CD8-positive, alpha-beta T cell (primary cell): ENCODE measurements at regions of chr15 and their contacts with region 1.

Region 1: DNA sequence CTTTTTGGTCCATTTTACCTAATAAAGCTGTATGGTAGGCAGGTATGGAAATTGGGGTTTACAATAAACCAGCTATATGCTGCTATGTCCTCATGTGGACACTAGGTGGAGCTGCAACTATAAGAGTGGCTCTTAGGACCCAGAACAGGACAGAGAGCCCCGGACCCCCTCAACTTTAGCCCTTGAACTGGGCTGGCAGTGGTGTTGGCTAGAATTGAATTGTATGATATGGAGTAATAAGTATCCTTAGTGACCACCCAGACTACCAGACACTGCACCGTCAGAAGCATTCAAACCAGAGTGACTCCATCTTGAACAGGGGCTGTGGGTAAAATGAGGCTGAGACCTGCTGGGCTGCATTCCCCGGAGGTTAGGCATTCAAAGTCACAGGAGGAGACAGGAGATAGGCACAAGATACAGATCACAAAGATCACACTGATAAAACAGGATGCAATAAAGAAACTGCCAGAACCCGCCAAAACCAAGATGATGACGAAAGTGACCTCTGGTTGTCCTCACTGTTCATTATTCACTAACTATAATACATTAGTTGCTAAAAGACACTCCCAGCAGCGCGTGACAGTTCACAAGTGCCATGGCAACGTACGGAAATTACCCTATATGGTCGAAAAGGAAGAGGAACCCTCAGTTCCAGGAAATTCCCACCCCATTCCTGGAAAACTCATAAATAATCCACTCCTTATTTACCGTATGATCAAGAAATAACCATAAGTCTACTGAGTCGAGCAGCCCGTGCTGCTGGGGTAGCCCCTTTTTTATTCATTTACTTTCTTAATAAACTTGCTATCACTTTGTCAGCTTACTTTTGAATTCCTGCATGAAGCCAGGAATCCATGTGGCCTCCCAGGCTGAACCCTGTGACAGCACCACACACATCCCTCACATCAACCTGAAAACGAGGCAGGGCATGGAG is 68.7 kb upstream of the BLM start:
- DNase-seq: peak in 8 of 9 experiments; percentile 33 to 81 (median 62)
- ATAC-seq: peak; percentile 89
- H3K4me3 ChIP-seq: no peak overlapping the region
- H3K4me3 Mint-ChIP-seq: peak overlapping the region; percentile 12
- H3K27ac ChIP-seq: no peak overlapping the region
- H3K27ac Mint-ChIP-seq: no peak overlapping the region
- H3K4me1 ChIP-seq: peaks cover 24% of the 10 kb centered on the region
- H3K4me1 Mint-ChIP-seq: peaks cover 20% of the 10 kb centered on the region
- H3K27me3 ChIP-seq: no peaks in the 10 kb centered on the region
- H3K27me3 Mint-ChIP-seq: no peaks in the 10 kb centered on the region
- CTCF ChIP-seq: peak; percentile 94

Region 2: GRCh38 chr15:90660195-90660998 is 12.0 kb after region 1 on chr15:
- CTCF ChIA-PET with region 1: interaction called, 12 read pairs
- POLR2A ChIA-PET with region 1: interaction called, 6 read pairs
- intact Hi-C with region 1: no loop called
- DNase-seq: peak in 8 of 9 experiments; percentile 51 to 75 (median 72)
- ATAC-seq: peak; percentile 83
- H3K4me3 ChIP-seq: peak overlapping the region; percentile 32 to 70
- H3K4me3 Mint-ChIP-seq: peak overlapping the region; percentile 70
- H3K27ac ChIP-seq: no peak overlapping the region
- H3K27ac Mint-ChIP-seq: no peak overlapping the region
- H3K4me1 ChIP-seq: peaks cover 75% of the 10 kb centered on the region
- H3K4me1 Mint-ChIP-seq: peaks cover 83% of the 10 kb centered on the region
- H3K27me3 ChIP-seq: peaks cover 0 to 26% of the 10 kb centered on the region in 2 experiments
- H3K27me3 Mint-ChIP-seq: peaks cover 9% of the 10 kb centered on the region
- CTCF ChIP-seq: no peak

Region 3: DNA sequence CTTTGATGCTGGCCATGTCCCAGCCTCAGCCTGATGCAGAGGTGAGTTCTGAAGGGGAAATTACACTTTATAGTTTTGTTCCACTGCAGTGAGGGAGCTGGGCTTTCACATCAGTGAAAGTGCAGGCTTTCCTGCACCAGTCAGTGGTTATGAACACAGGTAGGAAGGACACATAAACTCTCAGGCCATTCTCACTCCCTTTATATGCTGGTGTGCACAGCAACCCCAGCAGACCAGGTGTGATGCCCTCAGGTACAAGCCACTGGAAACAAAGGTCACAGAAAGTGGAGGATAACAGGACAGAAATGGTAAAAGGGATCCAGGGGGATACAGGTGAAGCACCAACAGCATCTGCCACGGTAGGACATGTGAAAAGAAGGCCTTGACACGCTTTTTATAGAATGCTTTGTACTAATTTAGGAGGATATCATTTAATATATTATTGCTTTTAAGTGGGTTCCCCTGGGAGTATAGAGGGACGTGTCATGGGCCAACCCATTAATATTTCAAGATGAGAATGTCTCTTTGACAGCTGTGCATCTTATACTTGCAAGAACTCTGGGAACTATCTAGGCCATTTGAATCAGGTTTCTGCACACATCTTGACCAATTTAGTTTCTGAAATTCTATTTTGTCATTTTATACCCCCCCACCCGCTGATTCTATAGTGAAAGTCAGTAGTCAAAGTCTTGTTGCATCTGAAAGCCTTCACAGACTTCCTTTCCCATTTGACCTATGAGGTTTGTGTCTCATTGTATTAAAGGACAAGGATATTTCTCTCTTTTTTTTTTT is 43.8 kb after region 1 on chr15:
- CTCF ChIA-PET with region 1: interaction called, 31 read pairs
- POLR2A ChIA-PET with region 1: no interaction called
- intact Hi-C with region 1: loop called (anchors 1 kb)
- DNase-seq: no peak
- ATAC-seq: no peak
- H3K4me3 ChIP-seq: no peak overlapping the region
- H3K4me3 Mint-ChIP-seq: no peak overlapping the region
- H3K27ac ChIP-seq: no peak overlapping the region
- H3K27ac Mint-ChIP-seq: no peak overlapping the region
- H3K4me1 ChIP-seq: peaks cover 3% of the 10 kb centered on the region
- H3K4me1 Mint-ChIP-seq: peaks cover 13% of the 10 kb centered on the region
- H3K27me3 ChIP-seq: no peaks in the 10 kb centered on the region
- H3K27me3 Mint-ChIP-seq: no peaks in the 10 kb centered on the region
- CTCF ChIP-seq: no peak

Region 4: GRCh38 chr15:90735923-90736322 is 87.5 kb after region 1 on chr15:
- CTCF ChIA-PET with region 1: no interaction called
- POLR2A ChIA-PET with region 1: no interaction called
- intact Hi-C with region 1: no loop called
- DNase-seq: no peak
- ATAC-seq: no peak
- H3K4me3 ChIP-seq: no peak overlapping the region
- H3K4me3 Mint-ChIP-seq: no peak overlapping the region
- H3K27ac ChIP-seq: no peak overlapping the region
- H3K27ac Mint-ChIP-seq: no peak overlapping the region
- H3K4me1 ChIP-seq: no peaks in the 10 kb centered on the region
- H3K4me1 Mint-ChIP-seq: peaks cover 8% of the 10 kb centered on the region
- H3K27me3 ChIP-seq: no peaks in the 10 kb centered on the region
- H3K27me3 Mint-ChIP-seq: no peaks in the 10 kb centered on the region
- CTCF ChIP-seq: no peak

Region 5: GRCh38 chr15:90790057-90790456 is 141.7 kb after region 1 on chr15:
- CTCF ChIA-PET with region 1: interaction called, 3 read pairs
- POLR2A ChIA-PET with region 1: no interaction called
- intact Hi-C with region 1: loop called in 1 of 2 experiments (anchors 10 kb)
- DNase-seq: no peak
- ATAC-seq: no peak
- H3K4me3 ChIP-seq: no peak overlapping the region
- H3K4me3 Mint-ChIP-seq: no peak overlapping the region
- H3K27ac ChIP-seq: no peak overlapping the region
- H3K27ac Mint-ChIP-seq: no peak overlapping the region
- H3K4me1 ChIP-seq: no peaks in the 10 kb centered on the region
- H3K4me1 Mint-ChIP-seq: no peaks in the 10 kb centered on the region
- H3K27me3 ChIP-seq: no peaks in the 10 kb centered on the region
- H3K27me3 Mint-ChIP-seq: no peaks in the 10 kb centered on the region
- CTCF ChIP-seq: no peak